ENCODE measurements at regions of chr1 and their contacts with region 1.

Region 1: GRCh38 chr1:205061665-205062069 is 18.7 kb downstream of the CNTN2 start:
- DNase-seq: peak; percentile 3
- H3K4me3 ChIP-seq: no peak overlapping the region
- H3K27ac ChIP-seq: no peak overlapping the region
- H3K27me3 ChIP-seq: peaks cover 26% of the 10 kb centered on the region
- CTCF ChIP-seq: peak; percentile 90

Region 2: GRCh38 chr1:204961765-204962419 is 99.8 kb before region 1 on chr1:
- CTCF ChIA-PET with region 1: interaction called, 11 read pairs
- POLR2A ChIA-PET with region 1: no interaction called
- DNase-seq: no peak
- H3K4me3 ChIP-seq: no peak overlapping the region
- H3K27ac ChIP-seq: no peak overlapping the region
- H3K27me3 ChIP-seq: peaks cover 33% of the 10 kb centered on the region
- CTCF ChIP-seq: no peak

Region 3: GRCh38 chr1:204980840-204981405 is 80.7 kb before region 1 on chr1:
- CTCF ChIA-PET with region 1: interaction called, 129 read pairs
- POLR2A ChIA-PET with region 1: no interaction called
- DNase-seq: no peak
- H3K4me3 ChIP-seq: no peak overlapping the region
- H3K27ac ChIP-seq: no peak overlapping the region
- H3K27me3 ChIP-seq: peaks cover 12% of the 10 kb centered on the region
- CTCF ChIP-seq: no peak

Region 4: GRCh38 chr1:204997591-204998355 is 63.9 kb before region 1 on chr1:
- CTCF ChIA-PET with region 1: interaction called, 129 read pairs
- POLR2A ChIA-PET with region 1: no interaction called
- DNase-seq: no peak
- H3K4me3 ChIP-seq: no peak overlapping the region
- H3K27ac ChIP-seq: no peak overlapping the region
- H3K27me3 ChIP-seq: peaks cover 16% of the 10 kb centered on the region
- CTCF ChIP-seq: no peak

Region 5: GRCh38 chr1:205042911-205043806 is 18.5 kb before region 1 on chr1 and contains the start of gene CNTN2:
- CTCF ChIA-PET with region 1: interaction called, 27 read pairs
- POLR2A ChIA-PET with region 1: no interaction called
- DNase-seq: no peak
- H3K4me3 ChIP-seq: no peak within 1 kb of the TSS
- H3K27ac ChIP-seq: no peak within 1 kb of the TSS
- H3K27me3 ChIP-seq: peaks cover 59% of the 10 kb centered on the region
- CTCF ChIP-seq: no peak
- polyA plus RNA-seq, gene CNTN2: not detected in 2 replicates

Region 6: DNA sequence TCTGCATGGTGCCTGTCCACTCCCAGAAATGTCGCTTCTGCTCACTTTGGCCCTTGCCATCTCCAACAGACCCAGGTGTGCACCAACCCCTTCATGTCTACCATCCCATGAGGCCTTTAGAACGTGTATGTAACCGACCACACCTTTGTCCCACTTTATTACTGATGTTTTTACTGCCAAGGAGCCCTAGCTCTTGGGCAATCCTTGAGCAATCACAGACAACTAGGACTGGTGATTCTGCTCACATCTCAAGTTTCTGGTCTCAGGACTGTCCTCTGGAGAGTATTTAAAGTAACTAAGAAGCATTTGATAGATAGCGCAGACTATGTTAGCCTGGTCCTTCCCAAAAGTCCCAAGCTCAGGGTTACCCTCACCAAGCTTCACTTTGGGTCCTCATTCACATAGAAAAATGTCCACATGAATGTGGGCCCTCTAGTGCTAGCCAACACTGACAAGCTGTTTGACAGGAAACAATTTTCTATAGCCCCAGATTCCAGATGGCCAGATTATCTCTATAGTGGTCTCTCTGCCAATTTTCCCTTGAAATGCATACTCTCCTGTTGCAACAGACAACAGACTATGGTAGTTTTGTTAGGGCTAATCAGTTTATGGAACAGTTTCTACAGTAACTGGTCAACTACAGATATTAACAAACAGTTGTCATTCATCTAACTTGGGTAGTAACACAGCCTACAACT is 29.5 kb after region 1 on chr1:
- CTCF ChIA-PET with region 1: interaction called, 57 read pairs
- POLR2A ChIA-PET with region 1: no interaction called
- DNase-seq: no peak
- H3K4me3 ChIP-seq: no peak overlapping the region
- H3K27ac ChIP-seq: no peak overlapping the region
- H3K27me3 ChIP-seq: no peaks in the 10 kb centered on the region
- CTCF ChIP-seq: no peak

Region 7: GRCh38 chr1:205255941-205256780 is 194.5 kb after region 1 on chr1:
- CTCF ChIA-PET with region 1: interaction called, 57 read pairs
- POLR2A ChIA-PET with region 1: no interaction called
- DNase-seq: peak; percentile 59
- H3K4me3 ChIP-seq: no peak overlapping the region
- H3K27ac ChIP-seq: no peak overlapping the region
- H3K27me3 ChIP-seq: no peaks in the 10 kb centered on the region
- CTCF ChIP-seq: peak; percentile 97

Region 8: DNA sequence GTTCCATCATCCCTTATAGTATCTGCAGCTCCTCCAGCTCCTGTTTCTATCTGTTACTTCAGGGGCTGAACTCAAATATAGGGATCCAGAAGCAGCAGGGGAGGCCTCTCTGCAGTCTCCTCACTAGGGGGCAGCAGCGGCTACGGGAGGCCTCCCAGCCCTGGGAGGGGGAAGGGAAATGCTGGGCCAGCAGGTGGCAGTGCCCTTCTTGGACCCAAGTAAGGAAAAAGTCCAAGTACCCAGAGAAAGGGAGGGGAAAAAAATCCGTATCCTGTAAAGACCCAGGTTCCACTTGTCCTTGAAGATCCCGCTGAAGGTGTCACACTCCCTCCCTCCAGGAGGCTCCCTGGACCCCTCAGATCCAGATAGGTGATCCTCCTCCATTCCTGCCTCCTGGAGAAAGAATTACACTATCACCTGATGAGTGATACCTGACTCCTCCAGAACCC is 274.0 kb after region 1 on chr1:
- CTCF ChIA-PET with region 1: no interaction called
- POLR2A ChIA-PET with region 1: no interaction called
- DNase-seq: no peak
- H3K4me3 ChIP-seq: no peak overlapping the region
- H3K27ac ChIP-seq: no peak overlapping the region
- H3K27me3 ChIP-seq: peaks cover 41% of the 10 kb centered on the region
- CTCF ChIP-seq: peak; percentile 98